Caco-2 (cell line): ENCODE measurements at regions of chr1 and their contacts with region 1.

Region 1: DNA sequence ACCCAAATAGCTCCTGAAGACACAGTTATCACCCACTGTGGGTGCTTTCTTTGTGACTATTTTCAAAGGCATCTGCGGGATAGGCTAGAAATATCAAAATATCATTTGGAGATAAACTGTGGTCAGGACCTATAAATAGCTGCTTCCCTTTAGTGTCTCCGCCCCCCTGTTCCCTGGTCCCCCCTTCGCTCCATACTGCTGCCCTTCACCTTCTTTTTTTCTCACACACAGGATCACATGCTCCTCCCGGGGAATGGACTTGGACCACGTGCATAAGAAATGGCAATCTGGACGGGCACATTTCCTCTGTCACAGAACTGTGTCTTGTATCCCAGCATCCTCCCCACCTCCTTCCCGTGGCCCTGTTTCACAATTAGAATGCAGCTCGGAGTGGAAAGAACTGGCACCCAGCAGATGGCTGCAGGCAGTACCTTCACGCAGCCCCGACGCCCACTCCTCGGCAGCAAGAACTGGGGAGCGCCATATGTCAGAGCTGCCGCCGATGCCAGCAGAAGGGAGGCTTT is 68.8 kb upstream of the SSX2IP start:
- DNase-seq: no peak
- H3K4me3 ChIP-seq: no peak overlapping the region
- H3K4me3 Mint-ChIP-seq: no peak overlapping the region
- H3K27ac Mint-ChIP-seq: no peak overlapping the region
- H3K4me1 ChIP-seq: no peaks in the 10 kb centered on the region
- H3K4me1 Mint-ChIP-seq: no peaks in the 10 kb centered on the region
- H3K27me3 ChIP-seq: no peaks in the 10 kb centered on the region
- H3K27me3 Mint-ChIP-seq: peaks cover 4% of the 10 kb centered on the region
- CTCF ChIP-seq: no peak

Region 2: DNA sequence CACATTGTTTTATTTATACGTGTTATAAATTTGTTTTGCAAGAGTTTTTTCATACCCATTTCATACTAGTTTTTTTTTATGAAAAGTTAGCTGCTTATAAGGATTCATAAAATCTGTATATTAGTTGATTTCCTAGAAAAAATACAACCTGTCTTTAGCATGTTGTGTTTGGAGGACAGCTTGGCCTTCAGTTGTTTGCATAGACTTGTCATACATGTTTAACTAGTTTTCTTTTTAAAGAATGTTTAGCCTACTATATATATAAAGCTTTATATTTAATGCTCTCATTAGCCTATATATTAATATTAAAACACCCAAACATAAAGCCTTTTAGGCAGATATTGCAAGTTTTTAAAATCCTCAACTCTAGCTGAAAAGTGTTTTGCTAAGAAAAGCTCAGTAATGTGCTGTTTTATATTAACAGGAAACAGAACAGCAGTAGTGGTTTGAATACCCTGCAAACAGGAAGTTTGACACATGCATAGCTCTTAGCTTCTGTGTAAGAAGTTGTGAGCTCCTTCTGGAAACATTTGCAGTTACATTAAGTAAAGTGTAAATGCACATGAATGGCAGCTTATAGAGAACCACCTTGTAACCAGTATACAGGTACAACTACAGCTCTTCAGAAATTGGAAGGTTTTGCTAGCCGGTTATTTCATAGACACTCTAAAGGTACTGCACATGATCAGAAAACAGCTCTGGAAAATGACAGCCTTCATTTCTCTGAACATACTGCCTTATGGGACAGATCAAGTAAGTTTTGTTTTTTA is 615.0 kb before region 1 on chr1 and contains the start of gene PRKACB:
- CTCF ChIA-PET with region 1: no interaction called
- POLR2A ChIA-PET with region 1: no interaction called
- intact Hi-C with region 1: loop called (anchors 5 kb)
- DNase-seq: no peak
- H3K4me3 ChIP-seq: no peak within 1 kb of the TSS
- H3K4me3 Mint-ChIP-seq: no peak within 1 kb of the TSS
- H3K27ac Mint-ChIP-seq: no peak within 1 kb of the TSS
- H3K4me1 ChIP-seq: no peaks in the 10 kb centered on the region
- H3K4me1 Mint-ChIP-seq: no peaks in the 10 kb centered on the region
- H3K27me3 ChIP-seq: no peaks in the 10 kb centered on the region
- H3K27me3 Mint-ChIP-seq: no peaks in the 10 kb centered on the region
- CTCF ChIP-seq: no peak
- total RNA-seq, gene PRKACB: 3.2 and 3.4 TPM in 2 replicates

Region 3: GRCh38 chr1:84721152-84721551 is 37.9 kb before region 1 on chr1:
- CTCF ChIA-PET with region 1: no interaction called
- POLR2A ChIA-PET with region 1: no interaction called
- intact Hi-C with region 1: no loop called
- DNase-seq: no peak
- H3K4me3 ChIP-seq: no peak overlapping the region
- H3K4me3 Mint-ChIP-seq: no peak overlapping the region
- H3K27ac Mint-ChIP-seq: no peak overlapping the region
- H3K4me1 ChIP-seq: peaks cover 25% of the 10 kb centered on the region
- H3K4me1 Mint-ChIP-seq: peaks cover 19% of the 10 kb centered on the region
- H3K27me3 ChIP-seq: no peaks in the 10 kb centered on the region
- H3K27me3 Mint-ChIP-seq: no peaks in the 10 kb centered on the region
- CTCF ChIP-seq: no peak

Region 4: GRCh38 chr1:84795966-84796600 is 37.1 kb after region 1 on chr1:
- CTCF ChIA-PET with region 1: no interaction called
- POLR2A ChIA-PET with region 1: no interaction called
- intact Hi-C with region 1: no loop called
- DNase-seq: no peak
- H3K4me3 ChIP-seq: no peak overlapping the region
- H3K4me3 Mint-ChIP-seq: no peak overlapping the region
- H3K27ac Mint-ChIP-seq: no peak overlapping the region
- H3K4me1 ChIP-seq: no peaks in the 10 kb centered on the region
- H3K4me1 Mint-ChIP-seq: no peaks in the 10 kb centered on the region
- H3K27me3 ChIP-seq: no peaks in the 10 kb centered on the region
- H3K27me3 Mint-ChIP-seq: peaks cover 12% of the 10 kb centered on the region
- CTCF ChIP-seq: no peak

Region 5: DNA sequence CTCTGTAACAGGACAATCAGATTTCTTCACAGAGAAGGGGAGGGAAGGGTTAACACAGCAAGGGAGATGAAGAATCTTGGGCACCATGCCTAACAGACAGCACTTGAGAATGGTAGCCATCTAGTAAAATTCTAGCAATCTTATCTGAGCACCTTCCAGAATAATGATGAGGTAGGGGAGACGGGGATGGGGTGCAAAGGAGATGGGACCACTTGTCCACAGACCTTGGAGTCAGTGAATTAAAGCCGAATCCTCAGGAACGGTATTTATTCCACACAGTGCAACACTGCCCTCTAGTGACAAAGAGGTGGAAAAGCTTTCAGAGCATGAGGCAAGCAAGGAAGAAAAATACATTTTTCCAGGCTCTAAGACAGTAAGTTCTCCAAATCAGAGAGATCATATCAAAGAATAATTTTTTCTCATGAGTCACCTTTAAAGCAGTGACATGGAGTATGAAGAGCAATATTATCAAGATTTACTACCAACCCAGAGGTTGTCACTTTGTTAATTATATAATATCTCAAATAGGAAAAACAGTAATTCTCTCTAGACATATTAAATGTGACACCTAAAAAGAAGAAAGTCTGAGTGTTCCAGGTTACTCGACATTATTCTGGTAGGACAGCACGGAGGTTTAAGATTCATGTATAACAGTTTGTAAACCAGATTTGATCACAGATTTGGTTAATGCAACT is 177.2 kb after region 1 on chr1:
- CTCF ChIA-PET with region 1: no interaction called
- POLR2A ChIA-PET with region 1: no interaction called
- intact Hi-C with region 1: loop called (anchors 5 kb)
- DNase-seq: peak in 1 of 2 experiments; percentile 48
- H3K4me3 ChIP-seq: no peak overlapping the region
- H3K4me3 Mint-ChIP-seq: no peak overlapping the region
- H3K27ac Mint-ChIP-seq: no peak overlapping the region
- H3K4me1 ChIP-seq: no peaks in the 10 kb centered on the region
- H3K4me1 Mint-ChIP-seq: no peaks in the 10 kb centered on the region
- H3K27me3 ChIP-seq: no peaks in the 10 kb centered on the region
- H3K27me3 Mint-ChIP-seq: peaks cover 17% of the 10 kb centered on the region
- CTCF ChIP-seq: peak; percentile 55 to 65